Activated CD8-positive, alpha-beta T cell treated with anti-CD3 and anti-CD28 coated beads, Interleukin-2, amount 10 ng/mL, durations not matched to agents 7 days and 5 days (primary cell): ENCODE measurements at regions of chr1 and their contacts with region 1.

Region 1: DNA sequence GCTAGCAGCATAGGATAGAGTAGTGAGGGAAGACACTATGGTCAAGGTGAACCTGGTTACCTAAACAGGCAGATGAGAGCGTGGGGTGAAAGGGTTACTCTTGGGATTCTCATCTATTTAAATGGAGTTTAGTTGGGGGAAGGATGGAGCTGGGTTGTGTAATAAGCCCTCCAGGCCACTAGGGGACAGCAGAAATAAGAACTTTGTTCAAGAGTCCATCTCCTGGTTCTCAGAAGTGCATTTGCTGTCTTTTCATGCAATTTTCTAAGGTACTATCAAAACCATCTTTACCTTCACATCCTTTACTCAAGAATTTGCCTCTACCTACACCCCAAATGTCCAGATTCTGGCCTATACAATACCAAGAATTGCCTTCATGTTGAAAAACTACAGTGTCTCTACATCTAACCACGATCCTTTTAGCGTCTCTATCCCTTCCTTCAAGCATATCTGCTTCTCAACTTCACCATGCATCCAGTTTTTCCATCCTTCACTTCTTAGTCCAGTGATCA is 28.0 kb downstream of the SLAMF1 start:
- DNase-seq: peak; percentile 61
- ATAC-seq: no peak
- H3K4me3 Mint-ChIP-seq: no peak overlapping the region
- H3K27ac Mint-ChIP-seq: peak overlapping the region; percentile 55
- H3K4me1 Mint-ChIP-seq: peaks cover 73% of the 10 kb centered on the region
- H3K27me3 Mint-ChIP-seq: no peaks in the 10 kb centered on the region

Region 2: GRCh38 chr1:160500266-160501020 is 118.4 kb before region 1 on chr1:
- CTCF ChIA-PET with region 1: no interaction called
- POLR2A ChIA-PET with region 1: no interaction called
- DNase-seq: no peak
- ATAC-seq: no peak
- H3K4me3 Mint-ChIP-seq: no peak overlapping the region
- H3K27ac Mint-ChIP-seq: no peak overlapping the region
- H3K4me1 Mint-ChIP-seq: peaks cover 3% of the 10 kb centered on the region
- H3K27me3 Mint-ChIP-seq: no peaks in the 10 kb centered on the region

Region 3: DNA sequence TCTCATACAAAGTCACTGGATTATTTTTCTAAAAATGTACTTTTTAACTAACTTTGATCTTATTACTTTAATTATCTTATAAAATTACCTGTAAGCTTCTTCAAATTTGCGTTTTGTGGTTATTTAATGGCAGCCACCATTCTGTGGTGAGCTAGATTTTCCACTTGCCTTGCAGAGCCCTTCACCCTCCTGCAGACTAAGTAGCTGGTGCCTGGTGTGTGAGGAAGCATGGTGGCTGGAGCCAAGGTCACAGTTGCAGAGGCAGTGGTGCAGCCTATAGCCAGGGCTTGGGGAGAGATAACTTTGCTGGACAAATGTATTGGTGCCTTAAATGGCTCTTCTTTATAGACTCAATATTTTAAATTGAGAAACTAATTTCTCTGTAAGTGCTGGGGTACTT is 28.3 kb before region 1 on chr1:
- CTCF ChIA-PET with region 1: no interaction called
- POLR2A ChIA-PET with region 1: no interaction called
- DNase-seq: no peak
- ATAC-seq: no peak
- H3K4me3 Mint-ChIP-seq: no peak overlapping the region
- H3K27ac Mint-ChIP-seq: no peak overlapping the region
- H3K4me1 Mint-ChIP-seq: peaks cover 5% of the 10 kb centered on the region
- H3K27me3 Mint-ChIP-seq: no peaks in the 10 kb centered on the region

Region 4: GRCh38 chr1:160639652-160640051 is 20.8 kb after region 1 on chr1:
- CTCF ChIA-PET with region 1: interaction called, 16 read pairs
- POLR2A ChIA-PET with region 1: interaction called, 16 read pairs
- DNase-seq: no peak
- ATAC-seq: no peak
- H3K4me3 Mint-ChIP-seq: peak overlapping the region; percentile 56
- H3K27ac Mint-ChIP-seq: peak overlapping the region; percentile 90
- H3K4me1 Mint-ChIP-seq: peaks cover 91% of the 10 kb centered on the region
- H3K27me3 Mint-ChIP-seq: no peaks in the 10 kb centered on the region

Region 5: GRCh38 chr1:160646711-160647328 is 28.0 kb after region 1 on chr1 and contains the start of gene SLAMF1:
- CTCF ChIA-PET with region 1: interaction called, 36 read pairs
- POLR2A ChIA-PET with region 1: interaction called, 13 read pairs
- DNase-seq: peak; percentile 55
- ATAC-seq: peak; percentile 53
- H3K4me3 Mint-ChIP-seq: peak within 1 kb of the TSS; percentile 87
- H3K27ac Mint-ChIP-seq: peak within 1 kb of the TSS; percentile 82
- H3K4me1 Mint-ChIP-seq: peaks cover 63% of the 10 kb centered on the region
- H3K27me3 Mint-ChIP-seq: no peaks in the 10 kb centered on the region
- total RNA-seq, gene SLAMF1: 48.5 to 50.1 TPM

Region 6: DNA sequence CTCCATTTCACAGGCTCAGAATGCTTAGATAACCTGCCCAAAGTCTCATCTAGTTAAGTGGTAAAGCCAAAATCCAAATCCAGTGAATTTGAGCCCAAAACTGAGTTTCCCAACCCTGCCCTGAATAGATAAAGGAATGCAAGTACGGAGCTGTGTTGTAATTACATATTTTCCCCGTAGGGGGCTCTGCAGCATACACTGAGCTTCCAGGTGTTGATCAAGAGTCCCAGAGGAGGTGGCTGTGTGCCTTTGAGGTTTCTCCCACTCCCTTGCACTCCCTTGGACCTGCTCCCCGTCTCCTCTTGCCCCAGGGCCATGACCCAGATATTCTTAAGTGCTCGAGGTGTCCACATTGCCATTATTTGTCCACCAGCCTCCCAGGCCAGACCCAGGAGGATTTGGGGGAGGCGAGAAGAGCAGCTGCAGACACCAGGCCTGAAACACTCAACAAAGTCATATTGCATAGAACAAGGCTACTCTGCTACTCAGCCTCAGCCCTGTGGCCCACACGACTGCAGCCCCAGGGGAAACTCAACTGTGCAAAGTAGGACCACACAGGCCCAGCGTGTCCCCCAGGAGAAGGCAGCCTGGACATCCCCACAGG is 158.8 kb after region 1 on chr1:
- CTCF ChIA-PET with region 1: no interaction called
- POLR2A ChIA-PET with region 1: no interaction called
- DNase-seq: peak; percentile 66
- ATAC-seq: peak; percentile 76
- H3K4me3 Mint-ChIP-seq: no peak overlapping the region
- H3K27ac Mint-ChIP-seq: peak overlapping the region; percentile 26
- H3K4me1 Mint-ChIP-seq: peaks cover 40% of the 10 kb centered on the region
- H3K27me3 Mint-ChIP-seq: no peaks in the 10 kb centered on the region